Activated CD4-positive, alpha-beta T cell treated with anti-CD3 and anti-CD28 coated beads, Interleukin-2, amount 10 ng/mL, durations not matched to agents 7 days and 5 days (primary cell): ENCODE measurements at regions of chr18 and their contacts with region 1.

Region 1: GRCh38 chr18:24362758-24363157 is 34.9 kb downstream of the OSBPL1A start:
- DNase-seq: no peak
- H3K4me3 Mint-ChIP-seq: no peak overlapping the region
- H3K27ac Mint-ChIP-seq: no peak overlapping the region
- H3K4me1 Mint-ChIP-seq: no peaks in the 10 kb centered on the region
- H3K27me3 Mint-ChIP-seq: no peaks in the 10 kb centered on the region

Region 2: DNA sequence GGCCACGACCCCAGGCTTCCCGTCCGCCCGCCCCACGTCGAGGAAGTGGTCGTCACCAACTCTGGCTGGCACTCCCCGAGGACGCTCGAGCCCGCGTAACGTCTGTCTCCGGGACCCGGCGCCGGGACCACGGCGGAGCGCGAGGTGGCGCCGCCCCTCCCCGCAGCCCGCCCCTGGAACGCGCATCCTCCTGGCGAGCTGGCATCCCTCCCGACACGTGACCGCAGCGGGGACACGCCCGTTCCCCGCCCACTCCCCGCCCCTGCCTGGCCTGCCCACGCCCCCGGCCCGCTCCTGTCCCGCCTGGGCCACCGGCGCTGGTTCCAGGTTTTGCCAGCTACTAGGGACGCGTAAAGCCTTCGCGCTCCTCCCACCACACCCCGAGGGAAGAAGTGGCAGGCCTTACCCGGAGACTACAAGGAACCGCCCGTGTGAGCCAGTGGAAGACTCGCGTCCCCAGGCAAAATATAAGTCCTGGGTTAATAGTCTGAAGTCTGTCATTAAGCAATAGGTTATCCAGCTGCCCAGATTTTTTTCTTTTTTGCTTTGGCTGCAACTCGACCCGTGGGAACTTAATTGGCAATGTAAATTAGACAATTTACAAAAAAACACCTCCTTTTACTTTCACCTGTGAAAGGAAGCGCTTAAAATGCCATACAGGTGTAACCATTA is 35.1 kb after region 1 on chr18 and contains the start of gene OSBPL1A:
- CTCF ChIA-PET with region 1: no interaction called
- POLR2A ChIA-PET with region 1: no interaction called
- DNase-seq: peak; percentile 85
- H3K4me3 Mint-ChIP-seq: peak within 1 kb of the TSS; percentile 85
- H3K27ac Mint-ChIP-seq: peak within 1 kb of the TSS; percentile 60
- H3K4me1 Mint-ChIP-seq: peaks cover 15% of the 10 kb centered on the region
- H3K27me3 Mint-ChIP-seq: peaks cover 23% of the 10 kb centered on the region
- total RNA-seq, gene OSBPL1A: 1.00 to 1.4 TPM

Region 3: GRCh38 chr18:24488824-24489493 is 126.2 kb after region 1 on chr18:
- CTCF ChIA-PET with region 1: interaction called, 31 read pairs
- POLR2A ChIA-PET with region 1: interaction called, 3 read pairs
- DNase-seq: peak; percentile 29
- H3K4me3 Mint-ChIP-seq: no peak overlapping the region
- H3K27ac Mint-ChIP-seq: no peak overlapping the region
- H3K4me1 Mint-ChIP-seq: peaks cover 8% of the 10 kb centered on the region
- H3K27me3 Mint-ChIP-seq: peaks cover 14% of the 10 kb centered on the region